ENCODE measurements at regions of chr4 and their contacts with region 1.

Region 1: DNA sequence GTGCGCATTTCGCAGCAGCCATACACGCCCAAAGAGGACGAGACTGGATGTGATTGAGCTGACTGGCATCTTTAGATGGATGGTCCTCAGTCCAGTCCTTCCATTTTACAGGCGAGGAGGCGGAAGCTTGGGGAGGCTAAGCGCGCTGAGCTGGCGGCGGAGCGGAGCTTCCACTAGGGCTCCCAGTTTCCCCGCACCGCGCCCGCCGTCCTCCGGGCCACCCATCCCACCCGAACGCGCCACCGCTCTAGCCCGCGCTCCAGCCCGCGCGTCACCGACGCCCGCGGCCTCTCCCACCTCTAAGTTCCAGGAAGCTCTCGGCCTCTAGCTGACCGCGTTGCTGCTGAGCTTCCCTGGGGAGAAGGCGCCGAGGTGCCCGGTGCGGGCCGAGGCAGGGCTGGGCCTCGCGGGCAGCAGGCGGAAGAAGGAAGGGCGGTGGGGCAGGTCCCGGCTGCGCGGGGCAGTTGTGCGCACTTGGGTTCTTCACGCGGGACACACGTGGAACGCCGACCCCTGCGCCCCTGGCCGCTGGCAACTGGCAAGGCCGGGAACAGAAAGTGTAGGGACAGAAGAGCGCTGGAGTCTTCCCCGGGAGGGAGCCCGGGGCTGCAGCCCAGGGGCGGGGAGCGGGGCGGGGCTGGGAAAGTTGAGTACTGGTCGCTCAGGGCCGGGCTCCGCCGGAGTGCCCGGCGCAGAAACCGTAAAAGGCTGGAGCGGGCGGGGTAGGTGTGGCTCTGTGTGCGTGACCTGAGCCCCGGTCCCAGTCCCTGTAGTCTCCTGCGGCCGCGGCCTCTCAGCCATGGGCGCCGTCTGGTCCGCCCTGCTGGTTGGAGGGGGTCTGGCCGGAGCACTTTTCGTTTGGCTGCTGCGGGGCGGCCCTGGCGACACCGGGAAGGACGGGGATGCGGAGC is at the start of gene STBD1:
- DNase-seq: peak; percentile 81
- H3K4me3 ChIP-seq: peak within 1 kb of the TSS; percentile 74 to 93 (median 89)
- H3K27ac ChIP-seq: peak within 1 kb of the TSS; percentile 62
- H3K4me1 ChIP-seq: peaks cover 22% of the 10 kb centered on the region
- H3K27me3 ChIP-seq: no peaks in the 10 kb centered on the region
- CTCF ChIP-seq: peak in 1 of 2 donors; percentile 10
- total RNA-seq, gene STBD1: 6.4 to 11.7 TPM

Region 2: GRCh38 chr4:76194325-76194724 is 111.9 kb before region 1 on chr4:
- CTCF ChIA-PET with region 1: no interaction called
- dilution Hi-C with region 1: no loop called
- in situ Hi-C with region 1: loop called in 1 of 2 experiments (anchors 25 kb)
- intact Hi-C with region 1: loop called (anchors 1 kb)
- DNase-seq: peak; percentile 96
- H3K4me3 ChIP-seq: no peak overlapping the region
- H3K27ac ChIP-seq: peak overlapping the region; percentile 84
- H3K4me1 ChIP-seq: peaks cover 59% of the 10 kb centered on the region
- H3K27me3 ChIP-seq: no peaks in the 10 kb centered on the region
- CTCF ChIP-seq: no peak

Region 3: DNA sequence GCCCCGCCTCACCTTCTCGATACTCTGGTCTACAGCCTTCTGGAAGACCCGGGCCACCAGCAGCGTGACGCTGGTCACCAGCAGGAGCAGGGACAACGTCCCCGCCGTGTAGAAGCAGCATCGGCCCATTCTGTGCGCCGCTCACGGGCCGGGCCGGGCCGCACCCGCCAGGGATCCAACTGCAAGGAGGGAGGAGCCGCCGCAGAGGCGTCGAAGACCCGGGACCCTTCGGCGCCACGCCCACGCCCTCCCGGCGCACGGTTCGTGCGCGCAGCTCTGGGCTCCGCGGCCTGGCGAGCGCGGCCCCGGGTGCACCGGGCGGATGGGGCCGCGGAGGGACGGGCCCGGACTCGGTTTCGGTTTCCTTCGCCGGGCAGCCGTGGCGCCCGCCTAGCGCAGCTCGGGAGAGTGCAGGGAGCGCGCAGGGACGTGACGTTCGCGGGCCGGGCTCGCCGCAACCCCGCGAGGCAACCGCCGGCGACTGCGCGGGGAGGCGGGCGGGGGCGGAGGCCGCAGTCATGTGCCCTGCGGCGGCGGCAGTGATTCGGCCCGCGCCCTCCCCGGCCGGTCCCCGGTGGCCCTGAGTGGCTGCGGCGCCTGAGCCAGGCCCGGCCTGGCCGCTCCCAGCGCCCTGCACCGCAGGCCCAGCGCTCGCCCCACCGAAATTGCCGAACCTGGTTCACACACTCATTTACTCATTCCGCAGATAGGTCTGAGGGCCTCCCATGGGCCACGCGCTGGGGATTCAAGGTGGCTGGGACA is 92.6 kb before region 1 on chr4 and contains the start of gene SCARB2:
- CTCF ChIA-PET with region 1: no interaction called
- dilution Hi-C with region 1: no loop called
- in situ Hi-C with region 1: no loop called
- intact Hi-C with region 1: loop called (anchors 1 kb)
- DNase-seq: peak; percentile 84
- H3K4me3 ChIP-seq: peak within 1 kb of the TSS; percentile 87 to 90 (median 89)
- H3K27ac ChIP-seq: peak within 1 kb of the TSS; percentile 77
- H3K4me1 ChIP-seq: peaks cover 32% of the 10 kb centered on the region
- H3K27me3 ChIP-seq: no peaks in the 10 kb centered on the region
- CTCF ChIP-seq: no peak
- total RNA-seq, gene SCARB2: 75.6 to 103 TPM

Region 4: GRCh38 chr4:76251441-76252270 is 54.6 kb before region 1 on chr4 and contains the start of gene FAM47E:
- CTCF ChIA-PET with region 1: no interaction called
- dilution Hi-C with region 1: no loop called
- in situ Hi-C with region 1: no loop called
- intact Hi-C with region 1: loop called (anchors 2 kb)
- DNase-seq: peak; percentile 56
- H3K4me3 ChIP-seq: peak within 1 kb of the TSS; percentile 59 to 65 (median 64)
- H3K27ac ChIP-seq: no peak within 1 kb of the TSS
- H3K4me1 ChIP-seq: peaks cover 11% of the 10 kb centered on the region
- H3K27me3 ChIP-seq: peaks cover 6% of the 10 kb centered on the region
- CTCF ChIP-seq: peak in 1 of 2 donors; percentile 59
- total RNA-seq, gene FAM47E: 0.80 to 1.5 TPM

Region 5: GRCh38 chr4:76326515-76326914 is 20.3 kb after region 1 on chr4:
- CTCF ChIA-PET with region 1: no interaction called
- dilution Hi-C with region 1: no loop called
- in situ Hi-C with region 1: no loop called
- intact Hi-C with region 1: no loop called
- DNase-seq: no peak
- H3K4me3 ChIP-seq: no peak overlapping the region
- H3K27ac ChIP-seq: no peak overlapping the region
- H3K4me1 ChIP-seq: no peaks in the 10 kb centered on the region
- H3K27me3 ChIP-seq: peaks cover 1% of the 10 kb centered on the region
- CTCF ChIP-seq: no peak

Region 6: GRCh38 chr4:76388160-76388908 is 82.1 kb after region 1 on chr4:
- CTCF ChIA-PET with region 1: no interaction called
- dilution Hi-C with region 1: no loop called
- in situ Hi-C with region 1: no loop called
- intact Hi-C with region 1: no loop called
- DNase-seq: peak; percentile 98
- H3K4me3 ChIP-seq: no peak overlapping the region
- H3K27ac ChIP-seq: peak overlapping the region; percentile 40
- H3K4me1 ChIP-seq: peaks cover 17% of the 10 kb centered on the region
- H3K27me3 ChIP-seq: no peaks in the 10 kb centered on the region
- CTCF ChIP-seq: no peak

Region 7: DNA sequence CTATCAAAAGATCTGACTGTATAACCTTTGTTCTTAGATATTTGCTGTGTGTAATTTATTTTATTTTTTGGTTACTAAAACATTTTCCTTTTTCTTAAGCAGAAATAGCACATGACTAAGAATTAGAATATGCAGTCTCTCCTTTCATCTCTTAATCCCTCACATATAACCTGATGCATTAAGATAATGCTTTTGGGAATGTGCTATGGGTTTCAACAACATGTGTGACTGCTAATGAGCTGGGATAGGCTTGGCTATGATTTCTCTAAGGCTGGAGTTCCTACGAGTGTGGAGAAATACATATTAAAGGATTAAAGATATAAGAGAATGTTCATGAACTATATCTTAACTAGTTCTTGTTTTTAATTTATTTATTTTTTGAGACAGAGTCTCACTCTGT is 170.4 kb after region 1 on chr4:
- CTCF ChIA-PET with region 1: no interaction called
- dilution Hi-C with region 1: no loop called
- in situ Hi-C with region 1: no loop called
- intact Hi-C with region 1: no loop called
- DNase-seq: no peak
- H3K4me3 ChIP-seq: no peak overlapping the region
- H3K27ac ChIP-seq: no peak overlapping the region
- H3K4me1 ChIP-seq: no peaks in the 10 kb centered on the region
- H3K27me3 ChIP-seq: no peaks in the 10 kb centered on the region
- CTCF ChIP-seq: no peak

Region 8: GRCh38 chr4:76504613-76505465 is 198.6 kb after region 1 on chr4:
- CTCF ChIA-PET with region 1: interaction called, 3 read pairs
- dilution Hi-C with region 1: no loop called
- in situ Hi-C with region 1: no loop called
- intact Hi-C with region 1: loop called (anchors 1 kb)
- DNase-seq: peak; percentile 27
- H3K4me3 ChIP-seq: no peak overlapping the region
- H3K27ac ChIP-seq: no peak overlapping the region
- H3K4me1 ChIP-seq: peaks cover 3% of the 10 kb centered on the region
- H3K27me3 ChIP-seq: no peaks in the 10 kb centered on the region
- CTCF ChIP-seq: peak; percentile 49 to 67

Measured in mammary epithelial cell (primary cell).